Activated CD4-positive, alpha-beta T cell treated with anti-CD3 and anti-CD28 coated beads for 36 hours (primary cell): ENCODE measurements at regions of chr10 and their contacts with region 1.

Region 1: GRCh38 chr10:79562135-79562756 is 2.0 kb upstream of the SFTPA2 start:
- DNase-seq: peak; percentile 85
- ATAC-seq: peak; percentile 88
- H3K4me3 Mint-ChIP-seq: no peak overlapping the region
- H3K27ac Mint-ChIP-seq: no peak overlapping the region
- H3K4me1 Mint-ChIP-seq: no peaks in the 10 kb centered on the region
- H3K27me3 Mint-ChIP-seq: peaks cover 30% of the 10 kb centered on the region

Region 2: GRCh38 chr10:79608505-79609375 is 46.5 kb after region 1 on chr10:
- CTCF ChIA-PET with region 1: interaction called, 3 read pairs
- POLR2A ChIA-PET with region 1: no interaction called
- intact Hi-C with region 1: loop called in 1 of 2 experiments (anchors 1 kb)
- DNase-seq: peak; percentile 74
- ATAC-seq: peak; percentile 58
- H3K4me3 Mint-ChIP-seq: no peak overlapping the region
- H3K27ac Mint-ChIP-seq: no peak overlapping the region
- H3K4me1 Mint-ChIP-seq: no peaks in the 10 kb centered on the region
- H3K27me3 Mint-ChIP-seq: peaks cover 1% of the 10 kb centered on the region

Region 3: GRCh38 chr10:79929409-79929904 is 367.2 kb after region 1 on chr10:
- CTCF ChIA-PET with region 1: interaction called, 3 read pairs
- POLR2A ChIA-PET with region 1: no interaction called
- intact Hi-C with region 1: loop called (anchors 1 to 2 kb)
- DNase-seq: peak; percentile 91
- ATAC-seq: peak; percentile 97
- H3K4me3 Mint-ChIP-seq: no peak overlapping the region
- H3K27ac Mint-ChIP-seq: no peak overlapping the region
- H3K4me1 Mint-ChIP-seq: peaks cover 2% of the 10 kb centered on the region
- H3K27me3 Mint-ChIP-seq: peaks cover 21% of the 10 kb centered on the region

Region 4: GRCh38 chr10:80046629-80047441 is 484.6 kb after region 1 on chr10:
- CTCF ChIA-PET with region 1: no interaction called
- POLR2A ChIA-PET with region 1: no interaction called
- intact Hi-C with region 1: loop called in 1 of 2 experiments (anchors 5 kb)
- DNase-seq: peak; percentile 86
- ATAC-seq: peak; percentile 85
- H3K4me3 Mint-ChIP-seq: no peak overlapping the region
- H3K27ac Mint-ChIP-seq: no peak overlapping the region
- H3K4me1 Mint-ChIP-seq: peaks cover 3% of the 10 kb centered on the region
- H3K27me3 Mint-ChIP-seq: no peaks in the 10 kb centered on the region